ENCODE measurements at regions of chr11 and their contacts with region 1.

Region 1: GRCh38 chr11:8652140-8652539 is 30.3 kb downstream of the TRIM66 start:
- DNase-seq: peak; percentile 26 to 54
- H3K4me3 ChIP-seq: no peak overlapping the region
- H3K27ac ChIP-seq: peak overlapping the region in 1 of 2 donors; percentile 15
- H3K4me1 ChIP-seq: no peaks in the 10 kb centered on the region
- H3K27me3 ChIP-seq: no peaks in the 10 kb centered on the region
- CTCF ChIP-seq: no peak
- POLR2A ChIP-seq: no peak

Region 2: DNA sequence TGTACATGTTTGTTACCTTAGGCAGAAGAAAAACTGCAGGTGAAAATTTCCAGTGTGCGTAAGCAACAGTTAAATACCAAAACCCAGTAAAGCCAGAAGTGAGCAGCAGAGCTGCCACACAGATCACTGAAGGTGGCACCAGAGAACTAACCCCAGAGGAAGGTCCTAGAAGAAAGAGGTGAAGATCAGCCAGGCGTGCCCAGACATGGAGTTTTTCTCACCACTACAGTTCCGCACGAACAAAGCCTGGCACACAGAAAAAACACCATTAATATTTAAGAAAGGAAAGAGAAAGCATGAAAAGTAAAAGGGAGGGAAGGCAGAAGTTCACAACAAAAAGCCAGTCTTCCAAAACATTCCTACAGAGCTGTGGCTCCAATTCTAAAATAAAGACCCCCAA is 118.8 kb before region 1 on chr11:
- intact Hi-C with region 1: no loop called
- DNase-seq: no peak
- H3K4me3 ChIP-seq: no peak overlapping the region
- H3K27ac ChIP-seq: no peak overlapping the region
- H3K4me1 ChIP-seq: no peaks in the 10 kb centered on the region
- H3K27me3 ChIP-seq: no peaks in the 10 kb centered on the region
- CTCF ChIP-seq: no peak
- POLR2A ChIP-seq: no peak

Region 3: DNA sequence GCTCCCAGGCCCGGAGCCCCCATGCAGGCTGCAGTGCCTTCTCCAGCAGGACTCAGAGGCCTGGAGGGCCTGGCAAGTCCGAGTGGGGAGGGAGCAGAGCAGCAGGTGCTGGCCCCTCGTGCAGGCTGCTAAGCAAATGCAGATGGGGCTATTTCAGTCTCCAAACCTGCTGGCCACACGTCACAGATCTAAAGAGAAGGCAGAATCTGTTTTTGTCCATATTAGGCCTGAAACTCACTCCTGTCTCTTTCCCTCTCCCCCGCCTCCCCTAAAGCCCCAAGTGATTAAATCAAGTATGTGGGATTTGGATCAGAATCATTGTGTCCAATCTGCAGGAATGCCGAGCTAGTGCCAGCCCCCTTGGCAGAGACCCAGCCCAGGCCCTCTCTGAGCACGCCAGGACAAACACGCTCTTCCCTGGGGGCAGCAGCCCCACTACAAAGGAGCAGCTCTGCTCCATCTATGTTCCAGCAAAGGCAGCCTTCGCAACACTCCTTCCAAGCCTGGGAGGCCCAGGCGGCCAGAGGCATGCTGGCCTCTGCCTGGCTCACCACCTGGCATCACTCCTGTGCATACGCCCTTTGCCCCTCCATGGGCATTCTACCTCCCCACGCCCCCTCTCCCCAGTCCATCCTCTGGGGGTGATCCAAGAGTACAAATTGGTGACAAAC is 57.0 kb after region 1 on chr11:
- intact Hi-C with region 1: no loop called
- DNase-seq: peak; percentile 97 to 98
- H3K4me3 ChIP-seq: no peak overlapping the region
- H3K27ac ChIP-seq: peak overlapping the region; percentile 94 to 99
- H3K4me1 ChIP-seq: peaks cover 6 to 27% of the 10 kb centered on the region in 2 donors
- H3K27me3 ChIP-seq: no peaks in the 10 kb centered on the region
- CTCF ChIP-seq: no peak
- POLR2A ChIP-seq: peak; percentile 77 to 81

Region 4: GRCh38 chr11:9516113-9516512 is 864.0 kb after region 1 on chr11:
- intact Hi-C with region 1: loop called (anchors 10 kb)
- DNase-seq: no peak
- H3K4me3 ChIP-seq: no peak overlapping the region
- H3K27ac ChIP-seq: no peak overlapping the region
- H3K4me1 ChIP-seq: no peaks in the 10 kb centered on the region
- H3K27me3 ChIP-seq: no peaks in the 10 kb centered on the region
- CTCF ChIP-seq: no peak
- POLR2A ChIP-seq: no peak

Measured in uterus (tissue), 4 donors.